Mucosa of descending colon (tissue), 3 donors: ENCODE measurements at regions of chr19 and their contacts with region 1.

Region 1: DNA sequence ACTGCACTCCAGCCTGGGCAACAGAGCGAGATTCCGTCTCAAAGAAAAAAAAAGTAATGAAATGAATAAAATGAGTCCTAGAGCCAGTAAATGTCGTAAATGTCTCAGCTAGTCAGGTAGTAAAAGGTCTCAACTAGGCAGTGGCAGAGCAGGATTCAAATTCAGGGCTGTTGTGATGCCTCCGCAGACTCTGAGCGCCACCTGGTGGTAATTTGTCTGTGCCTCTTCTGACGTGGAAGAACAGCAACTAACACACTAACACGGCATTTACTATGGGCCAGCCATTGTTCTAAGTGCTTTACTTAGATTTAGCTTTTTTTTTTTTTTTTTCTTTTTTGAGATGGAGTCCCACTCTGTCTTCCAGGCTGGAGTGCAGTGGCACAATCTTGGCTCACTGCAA is 30.2 kb downstream of the CYP2F1 start:
- DNase-seq: peak; percentile 70 to 99 (median 86)
- ATAC-seq: peak; percentile 98
- H3K4me3 ChIP-seq: no peak overlapping the region
- H3K4me1 ChIP-seq: no peaks in the 10 kb centered on the region
- CTCF ChIP-seq: peak; percentile 60

Region 2: DNA sequence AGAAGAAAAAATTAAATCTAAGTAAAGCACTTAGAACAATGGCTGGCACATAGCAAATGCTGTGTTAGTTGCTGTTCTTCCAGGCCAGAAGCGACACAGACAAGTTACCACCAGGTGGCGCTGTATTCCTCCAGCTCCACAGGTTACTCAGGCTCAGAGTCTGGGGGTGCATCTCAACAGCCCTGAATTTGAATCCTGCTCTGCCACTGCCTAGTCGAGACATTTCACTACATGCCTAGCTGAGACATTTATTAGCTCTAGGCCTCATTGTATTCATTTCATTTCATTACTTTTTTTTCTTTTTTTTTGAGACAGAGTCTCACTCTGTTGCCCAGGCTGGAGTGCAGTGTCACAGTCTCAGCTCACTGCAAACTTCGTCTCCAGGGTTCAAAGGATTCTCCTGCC is 169.8 kb before region 1 on chr19:
- intact Hi-C with region 1: loop called in 1 of 2 experiments (anchors 10 kb)
- DNase-seq: peak in 2 of 3 donors; percentile 74 to 94
- ATAC-seq: peak; percentile 88
- H3K4me3 ChIP-seq: no peak overlapping the region
- H3K4me1 ChIP-seq: peaks cover 10% of the 10 kb centered on the region
- CTCF ChIP-seq: peak; percentile 73